ENCODE measurements at regions of chr16 and their contacts with region 1.

Region 1: GRCh38 chr16:14003074-14003570 is 68.0 kb upstream of the MRTFB start:
- ATAC-seq: peak; percentile 93 to 98 (median 98)
- H3K4me3 ChIP-seq: peak overlapping the region; percentile 0 to 19 (median 10)
- H3K27ac ChIP-seq: peak overlapping the region in 1 of 2 donors; percentile 2
- H3K4me1 ChIP-seq: peaks cover 3 to 22% of the 10 kb centered on the region in 2 donors

Region 2: DNA sequence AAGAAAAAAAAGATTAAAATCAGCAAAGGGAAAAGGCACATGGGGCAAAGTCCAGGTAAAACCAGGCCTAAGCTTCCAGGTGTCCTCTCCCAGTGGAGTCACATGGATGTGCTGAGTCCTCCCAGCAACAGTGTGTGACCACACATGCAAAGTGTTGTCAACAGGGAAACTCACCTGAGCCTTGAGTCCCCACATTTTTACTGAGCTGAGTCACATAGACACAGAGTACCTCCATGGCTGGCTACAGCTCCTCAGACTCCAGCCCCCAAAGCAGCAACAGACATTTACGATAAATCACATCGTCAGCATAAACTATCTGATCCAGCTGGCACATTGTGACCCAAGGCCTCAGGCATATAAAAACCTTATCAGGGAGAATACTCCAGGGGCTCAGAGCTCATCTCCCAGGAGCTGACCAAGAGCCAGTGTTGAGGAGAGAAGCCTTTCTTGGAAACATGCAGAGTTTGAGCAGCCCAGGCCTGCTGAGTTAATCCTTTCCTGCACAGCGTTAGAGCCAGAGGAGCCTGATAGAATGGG is 62.7 kb before region 1 on chr16:
- in situ Hi-C with region 1: loop called in 1 of 9 experiments (anchors 10 kb)
- ATAC-seq: no peak
- H3K4me3 ChIP-seq: no peak overlapping the region
- H3K27ac ChIP-seq: no peak overlapping the region
- H3K4me1 ChIP-seq: no peaks in the 10 kb centered on the region

Region 3: DNA sequence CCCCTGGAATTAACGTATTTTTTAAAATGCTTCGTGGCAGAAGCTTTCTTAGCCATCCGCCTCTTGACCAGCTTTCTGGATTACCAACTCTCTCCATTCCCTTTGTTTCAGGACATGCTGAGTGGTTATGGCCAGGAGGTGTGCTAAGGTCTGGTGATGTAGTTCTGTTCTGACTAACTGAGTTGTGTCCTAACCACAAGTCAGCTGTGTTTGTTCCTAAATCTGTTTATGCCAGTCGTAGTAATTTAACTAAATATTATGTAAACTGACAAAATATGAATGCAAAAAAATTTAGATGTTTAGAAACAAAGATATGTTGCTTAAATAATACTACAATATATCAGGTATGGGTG is 129.6 kb after region 1 on chr16:
- in situ Hi-C with region 1: no loop called
- ATAC-seq: no peak
- H3K4me3 ChIP-seq: no peak overlapping the region
- H3K27ac ChIP-seq: no peak overlapping the region
- H3K4me1 ChIP-seq: no peaks in the 10 kb centered on the region

Region 4: GRCh38 chr16:14186007-14186794 is 183.1 kb after region 1 on chr16:
- in situ Hi-C with region 1: loop called in 1 of 9 experiments (anchors 25 kb)
- ATAC-seq: peak; percentile 80 to 87 (median 82)
- H3K4me3 ChIP-seq: peak overlapping the region; percentile 17 to 38 (median 28)
- H3K27ac ChIP-seq: peak overlapping the region; percentile 5 to 58
- H3K4me1 ChIP-seq: peaks cover 26 to 27% of the 10 kb centered on the region in 2 donors

Region 5: GRCh38 chr16:14285513-14286385 is 282.6 kb after region 1 on chr16:
- in situ Hi-C with region 1: no loop called
- ATAC-seq: peak; percentile 83 to 94 (median 88)
- H3K4me3 ChIP-seq: peak overlapping the region; percentile 60 to 90 (median 71)
- H3K27ac ChIP-seq: peak overlapping the region; percentile 40 to 76
- H3K4me1 ChIP-seq: peaks cover 0 to 4% of the 10 kb centered on the region in 2 donors

Region 6: DNA sequence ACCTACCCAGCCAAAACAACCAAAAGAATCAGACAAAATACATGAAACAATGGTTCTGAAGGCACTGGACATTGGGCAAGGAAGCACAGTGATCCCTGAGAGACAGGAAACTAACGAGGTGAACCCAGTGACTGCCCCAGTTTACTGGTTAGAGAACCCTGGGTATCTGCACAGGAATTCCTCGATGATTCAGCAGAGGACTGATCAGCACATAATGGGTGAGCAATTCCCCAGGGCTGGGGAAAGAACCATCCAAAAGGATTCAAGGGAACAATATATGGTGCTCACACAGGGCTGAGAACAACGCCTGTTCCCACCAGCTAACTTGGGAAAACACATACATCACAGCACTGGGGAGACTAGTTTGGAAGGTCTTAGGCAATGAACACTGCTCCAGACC is 459.7 kb after region 1 on chr16:
- in situ Hi-C with region 1: no loop called
- ATAC-seq: no peak
- H3K4me3 ChIP-seq: no peak overlapping the region
- H3K27ac ChIP-seq: no peak overlapping the region
- H3K4me1 ChIP-seq: no peaks in the 10 kb centered on the region

Measured in motor neuron (in vitro differentiated cells).